CD8-positive, alpha-beta memory T cell (primary cell): ENCODE measurements at regions of chr2 and their contacts with region 1.

Region 1: GRCh38 chr2:225052703-225053102 is 10.4 kb upstream of the DOCK10 start:
- DNase-seq: peak in 3 of 5 donors; percentile 3 to 60 (median 59)
- H3K4me3 ChIP-seq: peak overlapping the region; percentile 36
- H3K4me3 Mint-ChIP-seq: peak overlapping the region; percentile 0 to 70 (median 52)
- H3K27ac ChIP-seq: no peak overlapping the region
- H3K27ac Mint-ChIP-seq: peak overlapping the region; percentile 41 to 89 (median 76)
- H3K4me1 ChIP-seq: peaks cover 54% of the 10 kb centered on the region
- H3K4me1 Mint-ChIP-seq: peaks cover 62 to 73% (median 71%) of the 10 kb centered on the region in 3 donors
- H3K27me3 ChIP-seq: no peaks in the 10 kb centered on the region
- H3K27me3 Mint-ChIP-seq: peaks cover 0 to 3% of the 10 kb centered on the region in 2 donors

Region 2: GRCh38 chr2:224909885-224910573 is 142.7 kb before region 1 on chr2:
- CTCF ChIA-PET with region 1: no interaction called
- POLR2A ChIA-PET with region 1: interaction called, 11 read pairs
- DNase-seq: peak in 4 of 5 donors; percentile 8 to 58 (median 52)
- H3K4me3 ChIP-seq: no peak overlapping the region
- H3K4me3 Mint-ChIP-seq: peak overlapping the region in 3 of 7 donors; percentile 6 to 23 (median 23)
- H3K27ac ChIP-seq: no peak overlapping the region
- H3K27ac Mint-ChIP-seq: peak overlapping the region in 7 of 8 donors; percentile 19 to 80 (median 79)
- H3K4me1 ChIP-seq: peaks cover 23% of the 10 kb centered on the region
- H3K4me1 Mint-ChIP-seq: peaks cover 49 to 66% (median 65%) of the 10 kb centered on the region in 3 donors
- H3K27me3 ChIP-seq: no peaks in the 10 kb centered on the region
- H3K27me3 Mint-ChIP-seq: no peaks in the 10 kb centered on the region

Region 3: GRCh38 chr2:225041851-225042799 is 10.6 kb before region 1 on chr2 and contains the start of gene DOCK10:
- CTCF ChIA-PET with region 1: interaction called, 42 read pairs
- POLR2A ChIA-PET with region 1: interaction called, 30 read pairs
- DNase-seq: peak; percentile 23 to 69 (median 55)
- H3K4me3 ChIP-seq: peak within 1 kb of the TSS; percentile 99
- H3K4me3 Mint-ChIP-seq: peak within 1 kb of the TSS; percentile 93 to 100 (median 98)
- H3K27ac ChIP-seq: peak within 1 kb of the TSS; percentile 78
- H3K27ac Mint-ChIP-seq: peak within 1 kb of the TSS; percentile 90 to 98 (median 96)
- H3K4me1 ChIP-seq: peaks cover 45% of the 10 kb centered on the region
- H3K4me1 Mint-ChIP-seq: peaks cover 50 to 60% (median 56%) of the 10 kb centered on the region in 3 donors
- H3K27me3 ChIP-seq: no peaks in the 10 kb centered on the region
- H3K27me3 Mint-ChIP-seq: peaks cover 0 to 2% of the 10 kb centered on the region in 2 donors
- total RNA-seq, gene DOCK10: 135 to 138 TPM